ENCODE measurements at regions of chr6 and their contacts with region 1.

Region 1: GRCh38 chr6:150310539-150310938 is 58.3 kb upstream of the IYD start:
- DNase-seq: peak in 2 of 9 experiments; percentile 50 to 66
- ATAC-seq: peak; percentile 77
- H3K4me3 ChIP-seq: peak overlapping the region in 1 of 2 experiments; percentile 10
- H3K4me3 Mint-ChIP-seq: peak overlapping the region; percentile 57
- H3K27ac ChIP-seq: peak overlapping the region in 1 of 2 experiments; percentile 65
- H3K27ac Mint-ChIP-seq: peak overlapping the region; percentile 86
- H3K4me1 ChIP-seq: no peaks in the 10 kb centered on the region
- H3K4me1 Mint-ChIP-seq: peaks cover 18% of the 10 kb centered on the region
- H3K27me3 ChIP-seq: peaks cover 0 to 2% of the 10 kb centered on the region in 2 experiments
- H3K27me3 Mint-ChIP-seq: peaks cover 6% of the 10 kb centered on the region
- CTCF ChIP-seq: no peak

Region 2: DNA sequence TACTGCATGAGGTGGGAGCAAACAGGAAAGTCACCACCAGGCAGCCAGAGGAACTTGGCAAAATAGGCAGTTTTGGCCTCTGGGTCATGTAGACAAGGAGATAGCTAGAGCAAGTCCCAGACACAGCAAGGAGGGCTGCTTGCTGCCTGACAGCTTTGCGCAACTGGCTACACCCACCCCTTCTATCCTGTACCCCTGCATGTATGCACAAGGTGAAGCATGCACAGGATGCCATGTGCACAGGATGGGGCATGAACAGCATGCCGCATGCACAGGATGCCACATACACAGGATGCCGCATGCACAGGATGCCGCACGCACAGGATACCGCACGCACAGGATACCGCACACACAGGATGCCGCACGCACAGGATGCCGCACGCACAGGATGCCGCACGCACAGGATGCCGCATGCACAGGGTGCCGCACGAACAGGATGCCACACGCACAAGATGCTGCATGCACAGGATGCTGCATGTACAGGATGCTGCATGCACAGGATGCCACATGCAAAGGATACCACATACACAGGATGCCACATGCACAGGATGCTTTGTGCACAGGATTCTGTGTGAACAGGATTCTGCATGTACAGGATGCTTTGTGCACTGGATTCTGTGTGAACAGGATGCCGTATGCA is 46.7 kb before region 1 on chr6:
- CTCF ChIA-PET with region 1: no interaction called
- POLR2A ChIA-PET with region 1: interaction called, 3 read pairs
- intact Hi-C with region 1: loop called in 1 of 2 experiments (anchors 1 kb)
- DNase-seq: peak in 7 of 9 experiments; percentile 2 to 80 (median 53)
- ATAC-seq: peak; percentile 36
- H3K4me3 ChIP-seq: no peak overlapping the region
- H3K4me3 Mint-ChIP-seq: no peak overlapping the region
- H3K27ac ChIP-seq: peak overlapping the region; percentile 6 to 74
- H3K27ac Mint-ChIP-seq: peak overlapping the region; percentile 66
- H3K4me1 ChIP-seq: no peaks in the 10 kb centered on the region
- H3K4me1 Mint-ChIP-seq: peaks cover 10% of the 10 kb centered on the region
- H3K27me3 ChIP-seq: no peaks in the 10 kb centered on the region
- H3K27me3 Mint-ChIP-seq: no peaks in the 10 kb centered on the region
- CTCF ChIP-seq: no peak

Region 3: DNA sequence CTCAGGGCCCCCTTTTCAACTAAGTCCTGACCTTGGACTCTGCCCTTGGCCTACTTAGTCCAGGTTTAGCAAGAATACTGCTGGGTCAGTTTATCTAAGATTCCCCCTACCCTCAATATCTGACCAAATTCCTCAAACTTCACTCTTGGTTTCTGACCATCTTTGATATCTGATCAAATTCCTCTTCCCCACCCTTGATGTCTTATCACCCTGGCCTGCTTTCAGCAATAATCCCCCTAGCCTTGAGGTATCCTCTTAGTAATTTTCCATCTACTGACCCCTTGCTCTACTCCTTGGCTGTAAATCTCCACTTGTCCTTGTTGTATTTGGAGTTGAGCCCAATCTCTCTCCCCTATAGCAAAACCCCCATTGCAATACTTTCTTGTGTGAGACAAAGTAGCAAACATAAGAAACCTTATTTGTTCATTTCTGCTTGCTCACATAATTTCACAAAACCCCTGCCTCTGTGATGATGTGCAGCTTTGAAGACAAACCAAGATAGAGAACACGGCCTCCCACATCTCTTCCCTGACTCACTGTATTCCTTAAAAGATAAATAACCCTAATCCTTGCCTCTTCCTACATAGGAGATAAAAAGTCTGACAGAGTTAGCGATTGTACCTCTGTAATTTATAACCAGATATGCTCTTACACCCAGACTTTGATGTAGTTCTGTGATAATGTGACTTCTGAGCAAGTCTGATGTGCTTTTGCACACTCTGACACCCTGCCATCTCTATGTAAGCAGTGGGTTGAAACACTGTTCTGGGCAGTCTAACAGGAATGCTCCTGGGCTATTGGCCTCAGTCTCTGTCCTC is 44.4 kb after region 1 on chr6:
- CTCF ChIA-PET with region 1: no interaction called
- POLR2A ChIA-PET with region 1: no interaction called
- intact Hi-C with region 1: no loop called
- DNase-seq: no peak
- ATAC-seq: no peak
- H3K4me3 ChIP-seq: no peak overlapping the region
- H3K4me3 Mint-ChIP-seq: no peak overlapping the region
- H3K27ac ChIP-seq: no peak overlapping the region
- H3K27ac Mint-ChIP-seq: no peak overlapping the region
- H3K4me1 ChIP-seq: no peaks in the 10 kb centered on the region
- H3K4me1 Mint-ChIP-seq: no peaks in the 10 kb centered on the region
- H3K27me3 ChIP-seq: no peaks in the 10 kb centered on the region
- H3K27me3 Mint-ChIP-seq: peaks cover 5% of the 10 kb centered on the region
- CTCF ChIP-seq: no peak

Measured in CD8-positive, alpha-beta T cell (primary cell).